ENCODE measurements at regions of chr2 and their contacts with region 1.

Region 1: GRCh38 chr2:237403024-237403882 is 10.7 kb downstream of the COL6A3 start:
- DNase-seq: peak; percentile 80
- ATAC-seq: peak; percentile 13
- H3K4me3 ChIP-seq: no peak overlapping the region
- H3K27ac ChIP-seq: peak overlapping the region; percentile 51; the same call in 1 of the 2 replicates
- H3K4me1 ChIP-seq: peaks cover 36% of the 10 kb centered on the region
- H3K27me3 ChIP-seq: no peaks in the 10 kb centered on the region
- CTCF ChIP-seq: no peak
- POLR2A ChIP-seq: peak; percentile 26
- RAD21 ChIP-seq: no peak

Region 2: DNA sequence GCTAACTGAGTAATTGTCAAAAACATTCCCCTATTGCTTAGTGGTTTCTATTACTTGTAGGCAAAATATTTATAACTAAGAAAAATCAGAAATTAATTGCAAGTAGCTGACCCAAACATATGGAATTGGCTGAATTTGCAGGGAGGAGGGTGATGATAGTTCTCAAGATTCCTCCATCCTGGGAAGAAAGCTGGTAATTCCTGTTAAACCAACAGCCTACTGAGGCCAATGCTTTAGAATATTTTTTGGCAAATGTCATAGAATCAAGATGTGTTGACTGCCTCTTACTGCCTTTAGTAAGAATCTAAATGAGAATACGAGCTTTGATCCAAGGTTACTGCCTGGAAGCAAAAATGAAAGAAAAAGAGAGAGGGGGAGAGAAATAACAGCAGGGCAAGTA is 109.3 kb before region 1 on chr2:
- CTCF ChIA-PET with region 1: no interaction called
- POLR2A ChIA-PET with region 1: no interaction called
- dilution Hi-C with region 1: no loop called
- in situ Hi-C with region 1: no loop called
- intact Hi-C with region 1: no loop called
- DNase-seq: peak; percentile 71
- ATAC-seq: no peak
- H3K4me3 ChIP-seq: no peak overlapping the region
- H3K27ac ChIP-seq: peak overlapping the region; percentile 8; the same call in 1 of the 2 replicates
- H3K4me1 ChIP-seq: peaks cover 26% of the 10 kb centered on the region
- H3K27me3 ChIP-seq: no peaks in the 10 kb centered on the region
- CTCF ChIP-seq: no peak
- POLR2A ChIP-seq: no peak
- RAD21 ChIP-seq: no peak

Region 3: GRCh38 chr2:237354892-237355291 is 48.4 kb before region 1 on chr2:
- CTCF ChIA-PET with region 1: no interaction called
- POLR2A ChIA-PET with region 1: no interaction called
- dilution Hi-C with region 1: no loop called
- in situ Hi-C with region 1: no loop called
- intact Hi-C with region 1: no loop called
- DNase-seq: peak; percentile 72
- ATAC-seq: peak; percentile 13
- H3K4me3 ChIP-seq: no peak overlapping the region
- H3K27ac ChIP-seq: peak overlapping the region; percentile 8; the same call in 1 of the 2 replicates
- H3K4me1 ChIP-seq: peaks cover 19% of the 10 kb centered on the region
- H3K27me3 ChIP-seq: no peaks in the 10 kb centered on the region
- CTCF ChIP-seq: no peak
- POLR2A ChIP-seq: no peak
- RAD21 ChIP-seq: peak; percentile 3; the same call in 1 of the 2 replicates

Region 4: DNA sequence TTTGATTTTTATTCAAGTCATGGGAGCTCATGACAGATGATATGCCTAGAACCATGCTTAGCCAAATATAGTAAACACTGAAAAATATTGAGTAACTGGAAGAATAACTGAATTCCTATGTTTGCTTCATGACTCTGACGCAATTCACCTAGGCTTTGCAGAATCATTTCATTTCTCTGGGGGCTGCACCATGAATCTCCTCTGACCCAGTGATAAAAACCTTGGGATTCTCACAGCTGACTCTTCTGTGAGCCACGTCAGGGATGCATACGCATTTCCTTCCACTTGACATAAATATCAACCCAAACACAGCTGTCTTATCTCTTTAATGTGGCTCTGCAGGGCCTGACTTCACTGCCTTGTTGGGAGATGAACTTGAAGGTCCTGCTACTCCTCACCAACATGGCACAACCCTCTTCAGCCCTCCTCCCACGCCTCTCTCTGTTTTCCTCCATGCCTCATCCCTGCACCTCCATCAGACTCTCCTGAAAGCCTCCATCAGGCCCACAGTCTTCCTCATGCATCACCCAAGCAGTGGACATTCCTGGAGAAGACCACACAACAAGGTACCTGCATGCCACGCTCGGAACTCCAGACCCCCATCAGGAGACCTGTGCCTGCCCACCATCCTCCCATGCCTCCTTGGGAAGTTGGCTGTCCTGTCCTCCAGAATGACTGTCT is 19.1 kb before region 1 on chr2:
- CTCF ChIA-PET with region 1: no interaction called
- POLR2A ChIA-PET with region 1: no interaction called
- dilution Hi-C with region 1: no loop called
- in situ Hi-C with region 1: no loop called
- intact Hi-C with region 1: loop called (anchors 2 kb)
- DNase-seq: peak; percentile 98
- ATAC-seq: peak; percentile 74
- H3K4me3 ChIP-seq: no peak overlapping the region
- H3K27ac ChIP-seq: peak overlapping the region; percentile 87
- H3K4me1 ChIP-seq: peaks cover 22% of the 10 kb centered on the region
- H3K27me3 ChIP-seq: no peaks in the 10 kb centered on the region
- CTCF ChIP-seq: no peak
- POLR2A ChIP-seq: peak; percentile 68; the same call in 1 of the 2 replicates
- RAD21 ChIP-seq: no peak

Region 5: DNA sequence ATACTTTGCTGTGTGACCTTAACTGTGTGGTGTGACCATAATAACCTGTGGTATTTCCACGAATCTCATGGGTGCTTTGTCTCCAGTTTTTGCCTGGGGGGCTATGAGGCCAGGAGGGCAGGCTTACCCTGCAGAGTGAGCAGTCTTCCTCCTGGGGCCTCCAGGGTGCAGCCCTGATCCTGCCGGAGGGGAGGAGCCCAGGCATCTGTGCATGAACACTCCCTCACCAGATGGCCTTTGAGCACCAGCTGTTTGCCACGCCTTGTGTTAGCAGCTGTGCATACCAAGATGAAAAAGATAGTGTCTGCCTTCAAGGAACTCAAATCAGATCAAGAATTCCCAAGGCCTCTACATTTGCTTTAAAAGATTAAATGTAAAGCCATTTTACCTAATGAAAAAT is 320.3 kb after region 1 on chr2:
- CTCF ChIA-PET with region 1: no interaction called
- POLR2A ChIA-PET with region 1: no interaction called
- dilution Hi-C with region 1: no loop called
- in situ Hi-C with region 1: no loop called
- intact Hi-C with region 1: no loop called
- DNase-seq: peak; percentile 57
- ATAC-seq: peak; percentile 48; the same call in 1 of the 2 replicates
- H3K4me3 ChIP-seq: no peak overlapping the region
- H3K27ac ChIP-seq: no peak overlapping the region
- H3K4me1 ChIP-seq: peaks cover 14% of the 10 kb centered on the region
- H3K27me3 ChIP-seq: no peaks in the 10 kb centered on the region
- CTCF ChIP-seq: no peak
- POLR2A ChIP-seq: no peak
- RAD21 ChIP-seq: no peak

Region 6: DNA sequence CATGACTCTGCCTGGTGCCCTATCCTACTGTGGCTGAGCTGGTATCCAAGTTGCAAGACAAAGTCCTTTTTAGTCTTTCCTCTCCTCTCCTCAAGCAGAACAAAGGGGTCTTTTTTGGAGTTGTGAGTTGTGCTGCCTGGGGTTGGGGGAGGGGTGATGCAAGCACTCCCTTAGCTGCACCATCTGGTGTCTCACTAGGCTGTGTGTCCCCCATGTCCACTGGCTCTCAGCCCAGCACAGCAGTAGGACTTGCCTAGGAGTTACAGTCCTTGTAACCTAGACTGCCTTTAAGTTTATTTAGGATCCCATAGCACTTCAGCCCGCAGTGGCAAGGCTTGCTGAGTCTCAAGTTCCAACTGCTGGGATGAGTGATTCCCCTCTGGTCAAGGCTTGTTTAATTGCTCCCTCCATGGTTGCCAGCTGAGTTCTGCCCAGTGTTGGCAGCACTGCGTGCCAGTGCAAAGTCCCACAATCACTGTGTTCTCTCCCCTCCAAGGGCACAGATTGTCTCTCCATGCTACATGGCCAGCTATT is 813.5 kb after region 1 on chr2:
- CTCF ChIA-PET with region 1: no interaction called
- POLR2A ChIA-PET with region 1: interaction called, 15 read pairs
- dilution Hi-C with region 1: no loop called
- in situ Hi-C with region 1: no loop called
- intact Hi-C with region 1: no loop called
- DNase-seq: no peak
- ATAC-seq: no peak
- H3K4me3 ChIP-seq: no peak overlapping the region
- H3K27ac ChIP-seq: no peak overlapping the region
- H3K4me1 ChIP-seq: no peaks in the 10 kb centered on the region
- H3K27me3 ChIP-seq: peaks cover 7% of the 10 kb centered on the region
- CTCF ChIP-seq: no peak
- POLR2A ChIP-seq: no peak
- RAD21 ChIP-seq: no peak